ENCODE measurements at regions of chr5 and their contacts with region 1.

Region 1: GRCh38 chr5:108801776-108802175 is 54.1 kb downstream of the FER start:
- DNase-seq: no peak
- ATAC-seq: no peak
- H3K4me3 ChIP-seq: no peak overlapping the region
- H3K4me3 Mint-ChIP-seq: no peak overlapping the region
- H3K27ac ChIP-seq: no peak overlapping the region
- H3K27ac Mint-ChIP-seq: no peak overlapping the region
- H3K4me1 ChIP-seq: no peaks in the 10 kb centered on the region
- H3K4me1 Mint-ChIP-seq: peaks cover 0 to 4% (median 0%) of the 10 kb centered on the region in 3 donors
- H3K27me3 ChIP-seq: no peaks in the 10 kb centered on the region
- H3K27me3 Mint-ChIP-seq: no peaks in the 10 kb centered on the region

Region 2: DNA sequence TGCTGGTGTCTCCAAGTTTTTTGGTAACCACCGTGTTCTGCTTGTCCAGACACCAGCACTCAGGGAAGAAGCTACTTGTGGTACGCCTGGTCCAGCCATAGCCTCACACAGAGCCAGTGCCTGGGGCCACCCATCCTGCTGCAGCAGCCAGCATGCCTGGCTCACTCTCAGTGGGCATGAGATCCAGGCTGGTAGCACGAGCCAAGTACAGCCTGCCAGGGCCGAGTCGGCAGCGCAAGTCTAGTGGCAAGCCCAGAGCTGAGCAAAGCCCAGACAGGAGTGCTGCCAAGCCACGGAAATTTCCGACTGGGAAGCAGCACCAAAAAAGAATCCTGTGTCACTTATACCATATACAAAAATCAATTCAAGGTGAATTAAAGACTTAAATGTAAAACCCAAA is 383.6 kb before region 1 on chr5:
- CTCF ChIA-PET with region 1: no interaction called
- POLR2A ChIA-PET with region 1: no interaction called
- DNase-seq: no peak
- ATAC-seq: no peak
- H3K4me3 ChIP-seq: no peak overlapping the region
- H3K4me3 Mint-ChIP-seq: no peak overlapping the region
- H3K27ac ChIP-seq: no peak overlapping the region
- H3K27ac Mint-ChIP-seq: no peak overlapping the region
- H3K4me1 ChIP-seq: no peaks in the 10 kb centered on the region
- H3K4me1 Mint-ChIP-seq: no peaks in the 10 kb centered on the region
- H3K27me3 ChIP-seq: peaks cover 0 to 4% of the 10 kb centered on the region in 2 experiments
- H3K27me3 Mint-ChIP-seq: peaks cover 3 to 14% of the 10 kb centered on the region in 2 donors

Region 3: GRCh38 chr5:108747774-108748400 is 53.9 kb before region 1 on chr5 and contains the start of gene FER:
- CTCF ChIA-PET with region 1: no interaction called
- POLR2A ChIA-PET with region 1: interaction called in 1 of 2 experiments, 12 read pairs
- DNase-seq: peak in 30 of 35 experiments; percentile 8 to 86 (median 45)
- ATAC-seq: peak; percentile 8 to 53 (median 12)
- H3K4me3 ChIP-seq: peak within 1 kb of the TSS; percentile 87 to 93
- H3K4me3 Mint-ChIP-seq: peak within 1 kb of the TSS; percentile 87 to 99 (median 89)
- H3K27ac ChIP-seq: peak within 1 kb of the TSS; percentile 89
- H3K27ac Mint-ChIP-seq: peak within 1 kb of the TSS; percentile 77 to 83
- H3K4me1 ChIP-seq: peaks cover 5 to 13% of the 10 kb centered on the region in 2 experiments
- H3K4me1 Mint-ChIP-seq: peaks cover 11 to 22% (median 22%) of the 10 kb centered on the region in 3 donors
- H3K27me3 ChIP-seq: no peaks in the 10 kb centered on the region
- H3K27me3 Mint-ChIP-seq: peaks cover 0 to 4% of the 10 kb centered on the region in 2 donors
- total RNA-seq, gene FER: 7.0 to 19.6 (median 10.4) TPM

Measured in T-cell (primary cell).